Activated CD4-positive, alpha-beta memory T cell treated with anti-CD3 and anti-CD28 coated beads for 36 hours (primary cell): ENCODE measurements at regions of chr2 and their contacts with region 1.

Region 1: GRCh38 chr2:27683390-27684071 is 19.8 kb downstream of the SLC4A1AP start:
- DNase-seq: peak; percentile 90
- H3K4me3 Mint-ChIP-seq: no peak overlapping the region
- H3K27ac Mint-ChIP-seq: peak overlapping the region; percentile 76
- H3K4me1 Mint-ChIP-seq: peaks cover 41% of the 10 kb centered on the region
- H3K27me3 Mint-ChIP-seq: no peaks in the 10 kb centered on the region

Region 2: DNA sequence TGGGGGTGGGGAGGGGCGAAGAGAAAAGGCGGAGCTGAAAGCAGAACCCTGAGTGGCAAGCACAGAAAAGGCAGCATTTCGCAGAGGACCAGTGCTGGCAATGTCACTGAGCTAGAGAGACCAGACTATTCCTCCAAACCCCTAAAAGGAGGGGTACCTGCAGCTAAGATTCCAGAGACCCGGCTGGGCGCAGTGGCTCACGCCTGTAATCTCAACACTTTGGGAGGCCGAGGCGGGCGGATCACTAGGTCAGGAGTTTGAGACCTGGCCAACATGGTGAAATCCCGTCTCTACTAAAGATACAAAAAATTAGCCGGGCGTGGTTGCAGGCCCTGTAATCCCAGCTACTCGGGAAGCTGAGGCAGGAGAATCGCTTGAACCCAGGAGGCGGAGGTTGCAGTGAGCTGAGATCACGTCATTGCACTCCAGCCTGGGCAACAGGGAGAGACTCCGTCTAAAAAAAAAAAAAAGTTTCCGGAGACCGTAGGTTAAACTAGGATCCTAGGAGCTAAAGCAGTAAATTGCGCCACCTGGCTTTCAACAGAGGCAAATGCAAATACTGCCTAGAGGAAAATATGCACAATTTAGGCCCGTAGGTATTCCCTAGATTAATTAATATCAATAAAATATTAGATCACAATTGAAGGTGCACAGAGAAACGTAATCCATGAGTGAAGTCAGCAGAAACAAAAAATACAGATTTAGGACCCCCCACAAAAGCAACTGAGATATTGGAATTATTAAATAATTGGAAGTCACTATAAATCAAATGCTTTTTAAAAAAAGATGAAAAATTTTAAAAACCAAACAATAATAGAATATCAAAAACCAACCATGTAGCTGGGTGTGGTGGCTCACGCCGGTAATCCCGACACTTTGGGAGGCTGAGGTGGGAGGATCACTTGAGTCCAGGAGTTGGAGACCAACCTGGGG is 380.2 kb before region 1 on chr2:
- CTCF ChIA-PET with region 1: interaction called, 12 read pairs
- POLR2A ChIA-PET with region 1: interaction called, 3 read pairs
- intact Hi-C with region 1: no loop called
- DNase-seq: peak; percentile 48
- H3K4me3 Mint-ChIP-seq: peak overlapping the region; percentile 55
- H3K27ac Mint-ChIP-seq: no peak overlapping the region
- H3K4me1 Mint-ChIP-seq: peaks cover 8% of the 10 kb centered on the region
- H3K27me3 Mint-ChIP-seq: peaks cover 27% of the 10 kb centered on the region

Region 3: GRCh38 chr2:27409321-27410073 is 274.0 kb before region 1 on chr2 and contains the start of gene PPM1G:
- CTCF ChIA-PET with region 1: interaction called, 19 read pairs
- POLR2A ChIA-PET with region 1: interaction called, 4 read pairs
- intact Hi-C with region 1: loop called (anchors 10 kb)
- DNase-seq: peak; percentile 98
- H3K4me3 Mint-ChIP-seq: peak within 1 kb of the TSS; percentile 88
- H3K27ac Mint-ChIP-seq: peak within 1 kb of the TSS; percentile 87
- H3K4me1 Mint-ChIP-seq: peaks cover 32% of the 10 kb centered on the region
- H3K27me3 Mint-ChIP-seq: no peaks in the 10 kb centered on the region
- total RNA-seq, gene PPM1G: 127 to 132 TPM

Region 4: GRCh38 chr2:27628767-27629709 is 54.5 kb before region 1 on chr2 and contains the starts of genes CCDC121 and GPN1:
- CTCF ChIA-PET with region 1: interaction called, 31 read pairs
- POLR2A ChIA-PET with region 1: interaction called, 8 read pairs
- intact Hi-C with region 1: loop called (anchors 1 kb)
- DNase-seq: peak; percentile 98
- H3K4me3 Mint-ChIP-seq: no peak within 1 kb of the TSS
- H3K27ac Mint-ChIP-seq: no peak within 1 kb of the TSS
- H3K4me1 Mint-ChIP-seq: peaks cover 35% of the 10 kb centered on the region
- H3K27me3 Mint-ChIP-seq: no peaks in the 10 kb centered on the region
- total RNA-seq, gene CCDC121: 0.34 to 0.36 TPM
- total RNA-seq, gene GPN1: 54.4 to 56.8 TPM

Region 5: DNA sequence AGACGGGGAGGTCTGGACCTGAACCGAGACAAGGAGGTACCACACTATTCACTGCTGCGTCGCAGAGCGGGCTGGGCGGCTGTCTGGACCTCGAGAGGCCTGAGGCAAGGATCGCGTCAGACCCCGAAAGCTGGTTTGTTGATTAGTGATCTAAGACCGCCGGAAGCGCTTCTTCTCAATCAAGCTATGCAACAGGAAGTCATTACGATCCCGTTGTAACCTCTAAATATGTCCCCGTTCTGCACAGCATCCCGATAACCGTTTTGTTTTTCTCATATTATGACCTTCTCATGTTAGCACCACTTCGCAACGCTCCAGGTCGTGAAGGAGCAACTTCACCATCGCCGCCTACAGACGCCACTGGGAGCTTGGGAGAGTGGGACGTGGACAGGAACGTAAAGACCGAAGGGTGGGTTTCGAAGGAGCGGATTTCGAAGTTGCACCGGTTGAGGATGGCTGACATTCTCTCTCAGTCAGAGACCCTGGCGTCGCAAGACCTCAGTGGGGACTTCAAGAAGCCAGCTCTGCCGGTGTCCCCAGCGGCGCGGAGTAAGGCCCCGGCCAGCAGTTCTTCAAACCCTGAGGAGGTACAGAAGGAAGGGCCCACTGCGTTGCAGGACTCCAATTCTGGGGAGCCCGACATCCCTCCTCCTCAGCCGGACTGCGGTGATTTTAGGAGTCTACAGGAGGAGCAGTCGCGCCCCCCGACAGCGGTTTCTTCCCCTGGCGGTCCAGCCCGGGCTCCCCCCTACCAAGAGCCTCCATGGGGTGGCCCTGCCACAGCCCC is 19.9 kb before region 1 on chr2 and contains the starts of genes SLC4A1AP and SUPT7L:
- CTCF ChIA-PET with region 1: interaction called, 45 read pairs
- POLR2A ChIA-PET with region 1: interaction called, 21 read pairs
- intact Hi-C with region 1: loop called (anchors 1 kb)
- DNase-seq: peak; percentile 81
- H3K4me3 Mint-ChIP-seq: peak within 1 kb of the TSS; percentile 99
- H3K27ac Mint-ChIP-seq: peak within 1 kb of the TSS; percentile 100
- H3K4me1 Mint-ChIP-seq: peaks cover 50% of the 10 kb centered on the region
- H3K27me3 Mint-ChIP-seq: no peaks in the 10 kb centered on the region
- total RNA-seq, gene SLC4A1AP: 26.5 TPM
- total RNA-seq, gene SUPT7L: 30.1 to 30.3 TPM

Region 6: GRCh38 chr2:27860111-27860510 is 176.6 kb after region 1 on chr2:
- CTCF ChIA-PET with region 1: interaction called, 10 read pairs
- POLR2A ChIA-PET with region 1: no interaction called
- intact Hi-C with region 1: no loop called
- DNase-seq: no peak
- H3K4me3 Mint-ChIP-seq: no peak overlapping the region
- H3K27ac Mint-ChIP-seq: peak overlapping the region; percentile 67
- H3K4me1 Mint-ChIP-seq: peaks cover 52% of the 10 kb centered on the region
- H3K27me3 Mint-ChIP-seq: no peaks in the 10 kb centered on the region